SK-N-SH (cell line): ENCODE measurements at regions of chr2 and their contacts with region 1.

Region 1: DNA sequence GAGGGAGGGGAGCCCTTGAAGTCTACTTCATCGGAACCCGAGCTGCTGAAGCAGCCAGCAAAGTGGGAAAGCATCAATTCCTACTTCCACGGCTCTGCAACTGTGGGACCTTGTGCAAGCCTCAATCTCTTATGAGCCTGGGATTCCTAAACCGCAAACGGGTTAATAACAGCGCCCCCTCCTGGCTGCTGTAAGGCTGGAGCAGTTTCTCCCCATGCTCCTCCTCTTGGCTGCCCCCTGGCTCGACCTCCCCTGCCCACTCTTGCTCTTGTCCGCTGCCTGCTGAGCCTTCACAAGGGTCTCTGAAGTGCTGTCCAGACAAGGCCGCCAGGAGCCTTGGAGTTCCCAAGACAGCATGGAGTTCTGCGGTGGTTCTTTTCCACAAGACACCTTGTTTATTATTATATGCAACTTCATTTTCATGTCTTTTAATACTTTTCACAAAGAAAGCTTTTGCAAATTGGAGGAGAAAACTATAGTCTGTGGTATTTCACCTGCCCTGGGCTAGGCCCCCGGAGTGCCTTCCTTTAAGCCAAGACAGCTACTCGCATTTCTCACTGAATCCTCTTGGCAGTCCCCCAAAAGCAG is 157.2 kb downstream of the DDX1 start:
- DNase-seq: peak; percentile 70
- H3K4me3 ChIP-seq: no peak overlapping the region
- H3K27ac ChIP-seq: no peak overlapping the region
- H3K4me1 ChIP-seq: peaks cover 0 to 8% of the 10 kb centered on the region in 2 experiments; a peak in 1 of 4 replicates
- H3K27me3 ChIP-seq: no peaks in the 10 kb centered on the region
- CTCF ChIP-seq: peak; percentile 16; the same call in 1 of the 2 replicates
- EP300 ChIP-seq: no peak
- RAD21 ChIP-seq: peak; percentile 36; the same call in 1 of the 2 replicates

Region 2: DNA sequence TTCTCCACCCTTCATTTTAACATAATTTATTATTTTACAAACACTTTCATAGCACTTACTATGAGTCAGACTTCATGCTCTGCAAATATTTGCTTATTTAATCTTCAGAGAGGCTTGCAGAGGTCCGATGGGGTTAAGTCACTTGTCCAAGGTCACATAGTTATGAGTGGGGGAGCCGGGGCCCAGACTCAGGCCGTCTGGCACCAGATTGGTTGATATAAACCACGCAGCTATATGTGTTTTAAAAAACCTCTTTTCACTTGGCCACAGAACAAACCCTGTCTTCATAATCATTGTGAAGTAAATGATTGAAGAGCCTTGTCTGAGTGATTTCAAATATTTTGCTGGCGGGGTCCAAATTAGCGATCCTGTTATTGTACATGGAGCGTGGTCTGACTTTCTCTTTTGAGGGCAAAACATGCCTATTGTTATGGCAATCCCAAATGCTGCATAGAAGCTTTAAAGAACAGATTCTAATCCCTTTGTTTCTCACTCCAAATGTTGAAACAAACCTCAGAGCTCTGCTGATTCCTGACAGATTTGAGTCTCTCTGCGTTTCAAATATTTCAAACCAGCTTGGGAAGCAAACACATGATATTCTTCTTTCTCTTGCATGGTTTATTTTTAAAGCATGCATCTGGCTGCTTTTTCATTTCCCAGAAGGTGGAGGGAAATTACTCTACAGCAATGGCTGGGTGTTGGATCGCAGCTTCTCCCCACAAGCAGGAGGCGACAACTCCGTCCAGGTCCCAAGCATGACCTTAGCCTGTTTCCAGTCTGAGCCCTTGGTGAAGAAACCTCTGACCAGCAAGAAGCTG is 14.8 kb before region 1 on chr2:
- CTCF ChIA-PET with region 1: interaction called, 14 read pairs
- POLR2A ChIA-PET with region 1: no interaction called
- DNase-seq: no peak
- H3K4me3 ChIP-seq: no peak overlapping the region
- H3K27ac ChIP-seq: no peak overlapping the region
- H3K4me1 ChIP-seq: peaks cover 0 to 39% of the 10 kb centered on the region in 2 experiments; a peak in 2 of 4 replicates
- H3K27me3 ChIP-seq: no peaks in the 10 kb centered on the region
- CTCF ChIP-seq: no peak
- EP300 ChIP-seq: no peak
- RAD21 ChIP-seq: no peak